Activated naive CD8-positive, alpha-beta T cell treated with anti-CD3 and anti-CD28 coated beads, Interleukin-2, amount 10 ng/mL, durations not matched to agents 7 days and 5 days (primary cell): ENCODE measurements at regions of chr7 and their contacts with region 1.

Region 1: DNA sequence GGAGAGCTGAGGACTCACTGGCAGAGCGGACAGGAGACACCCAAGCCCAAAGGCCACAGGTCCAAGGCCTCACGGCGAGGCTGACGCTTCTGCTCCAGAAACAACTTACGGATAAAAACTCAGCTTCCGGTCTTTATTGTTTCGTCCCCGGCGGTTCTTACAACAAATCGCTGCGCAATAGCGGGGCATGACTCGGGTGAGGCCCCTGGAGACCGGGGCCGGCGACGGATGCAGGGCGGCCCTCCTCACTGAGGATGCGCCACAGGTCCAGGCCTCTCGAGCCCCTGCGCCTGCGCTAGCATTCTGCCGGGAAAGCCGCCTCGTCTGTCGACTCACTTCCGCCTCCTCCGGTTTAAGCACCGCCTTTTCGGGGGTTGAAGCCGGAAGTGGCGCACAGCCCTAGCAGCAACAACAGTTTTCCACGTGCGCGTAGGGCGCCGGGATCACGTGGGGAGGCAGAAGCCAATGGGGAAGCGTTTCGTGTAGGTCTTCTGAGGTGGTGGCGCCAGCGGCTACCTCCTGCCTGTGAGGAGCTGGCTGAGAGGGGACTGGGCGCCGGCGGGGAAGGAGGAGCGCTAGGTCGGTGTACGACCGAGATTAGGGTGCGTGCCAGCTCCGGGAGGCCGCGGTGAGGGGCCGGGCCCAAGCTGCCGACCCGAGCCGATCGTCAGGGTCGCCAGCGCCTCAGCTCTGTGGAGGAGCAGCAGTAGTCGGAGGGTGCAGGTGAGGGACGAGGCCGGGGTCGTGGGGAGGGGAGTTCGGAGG is at the starts of genes DNAJB9 and THAP5:
- DNase-seq: peak; percentile 94
- ATAC-seq: peak; percentile 95
- H3K4me3 Mint-ChIP-seq: peak within 1 kb of the TSS; percentile 97
- H3K27ac Mint-ChIP-seq: peak within 1 kb of the TSS; percentile 100
- H3K4me1 Mint-ChIP-seq: peaks cover 23% of the 10 kb centered on the region
- H3K27me3 Mint-ChIP-seq: no peaks in the 10 kb centered on the region
- total RNA-seq, gene DNAJB9: 11.3 to 11.9 TPM
- total RNA-seq, gene THAP5: 32.8 to 38.9 TPM

Region 2: DNA sequence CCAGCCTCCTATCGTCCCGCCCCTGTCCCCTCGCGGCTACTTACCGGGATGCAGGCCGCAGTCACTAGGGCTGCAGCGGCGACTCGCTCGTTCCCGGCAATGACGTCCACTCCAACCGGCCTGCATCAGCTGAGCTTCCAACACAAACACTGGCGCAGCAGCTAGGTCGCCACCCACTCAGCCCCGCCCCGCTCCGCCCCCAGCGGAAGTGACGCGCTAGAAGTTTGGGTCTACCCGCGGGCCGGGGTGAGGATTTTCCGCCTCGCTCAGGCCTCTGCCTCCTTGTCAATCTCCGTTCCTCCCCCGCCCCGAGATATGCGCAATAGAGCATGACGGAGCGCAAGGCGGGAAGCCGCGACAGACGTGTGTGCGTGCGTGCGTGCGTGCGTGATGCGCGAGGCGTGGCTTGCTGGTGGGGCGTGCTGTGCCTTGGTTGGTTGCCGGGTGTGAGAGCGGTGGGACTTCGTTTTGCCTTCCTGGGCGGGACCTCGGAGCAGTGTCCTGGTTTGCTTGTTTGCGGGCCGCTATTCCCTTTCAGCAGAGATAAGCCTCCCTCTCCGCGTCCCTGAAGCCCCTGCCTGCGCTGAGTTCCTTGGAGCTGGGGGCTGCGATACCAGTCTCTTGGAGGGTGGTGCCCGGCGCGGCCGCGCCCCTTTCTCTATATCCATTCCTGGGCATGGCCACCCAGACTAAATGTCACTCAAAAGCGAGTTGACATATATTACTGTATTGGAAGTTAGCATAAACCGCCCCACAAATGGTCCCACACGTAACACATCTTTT is 43.4 kb before region 1 on chr7 and contains the start of gene PNPLA8:
- POLR2A ChIA-PET with region 1: interaction called, 42 read pairs
- DNase-seq: peak; percentile 100
- ATAC-seq: peak; percentile 92
- H3K4me3 Mint-ChIP-seq: peak within 1 kb of the TSS; percentile 97
- H3K27ac Mint-ChIP-seq: peak within 1 kb of the TSS; percentile 97
- H3K4me1 Mint-ChIP-seq: peaks cover 28% of the 10 kb centered on the region
- H3K27me3 Mint-ChIP-seq: no peaks in the 10 kb centered on the region
- total RNA-seq, gene PNPLA8: 17.2 to 17.8 TPM